Uterus (tissue), 4 donors: ENCODE measurements at regions of chr1 and their contacts with region 1.

Region 1: GRCh38 chr1:201792534-201793305 is 36.2 kb upstream of the IPO9 start:
- DNase-seq: peak; percentile 79 to 86
- H3K4me3 ChIP-seq: no peak overlapping the region
- H3K27ac ChIP-seq: peak overlapping the region; percentile 76 to 84
- H3K4me1 ChIP-seq: peaks cover 0 to 25% of the 10 kb centered on the region in 2 donors
- H3K27me3 ChIP-seq: no peaks in the 10 kb centered on the region
- CTCF ChIP-seq: peak; percentile 97 to 99 (median 98)
- POLR2A ChIP-seq: peak in 1 of 2 donors; percentile 24

Region 2: DNA sequence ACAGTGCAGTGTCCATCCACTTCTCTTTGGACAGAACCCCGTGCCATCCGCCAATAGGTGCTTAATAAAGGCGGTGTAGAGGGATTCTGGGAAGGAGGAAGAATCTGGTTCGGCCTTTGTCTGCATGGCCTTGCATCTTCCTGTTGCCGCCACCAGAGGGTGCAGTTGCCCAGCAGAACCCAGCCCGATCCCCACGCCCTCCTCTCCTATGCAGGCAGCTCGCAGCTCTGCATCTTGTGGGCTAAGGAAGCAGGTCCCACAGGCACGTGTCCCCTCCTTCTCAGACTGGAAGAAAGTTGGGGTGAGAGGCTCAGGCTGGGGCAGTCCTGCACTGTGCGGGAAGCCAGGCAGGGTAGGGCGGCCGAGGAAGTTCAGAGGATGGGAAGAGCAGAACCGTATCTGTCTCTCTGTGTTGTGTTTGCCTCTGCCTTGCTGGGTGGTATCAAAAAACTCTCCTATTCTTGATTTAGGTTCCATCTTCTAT is 233.0 kb before region 1 on chr1:
- intact Hi-C with region 1: loop called (anchors 10 kb)
- DNase-seq: peak; percentile 83 to 84
- H3K4me3 ChIP-seq: no peak overlapping the region
- H3K27ac ChIP-seq: peak overlapping the region in 1 of 2 donors; percentile 12
- H3K4me1 ChIP-seq: peaks cover 0 to 10% of the 10 kb centered on the region in 2 donors
- H3K27me3 ChIP-seq: no peaks in the 10 kb centered on the region
- CTCF ChIP-seq: peak; percentile 95 to 99 (median 98)
- POLR2A ChIP-seq: no peak

Region 3: GRCh38 chr1:201709564-201710295 is 83.0 kb before region 1 on chr1:
- intact Hi-C with region 1: loop called (anchors 2 kb)
- DNase-seq: peak; percentile 79 to 80
- H3K4me3 ChIP-seq: no peak overlapping the region
- H3K27ac ChIP-seq: peak overlapping the region; percentile 89 to 96
- H3K4me1 ChIP-seq: peaks cover 21 to 25% of the 10 kb centered on the region in 2 donors
- H3K27me3 ChIP-seq: no peaks in the 10 kb centered on the region
- CTCF ChIP-seq: peak; percentile 91 to 97 (median 94)
- POLR2A ChIP-seq: no peak